ENCODE measurements at regions of chr22 and their contacts with region 1.

Region 1: GRCh38 chr22:36470162-36470993 is 11.1 kb downstream of the TXN2 start:
- DNase-seq: peak; percentile 88
- H3K4me3 Mint-ChIP-seq: no peak overlapping the region
- H3K27ac Mint-ChIP-seq: peak overlapping the region; percentile 57
- H3K4me1 Mint-ChIP-seq: peaks cover 21% of the 10 kb centered on the region
- H3K27me3 Mint-ChIP-seq: no peaks in the 10 kb centered on the region

Region 2: DNA sequence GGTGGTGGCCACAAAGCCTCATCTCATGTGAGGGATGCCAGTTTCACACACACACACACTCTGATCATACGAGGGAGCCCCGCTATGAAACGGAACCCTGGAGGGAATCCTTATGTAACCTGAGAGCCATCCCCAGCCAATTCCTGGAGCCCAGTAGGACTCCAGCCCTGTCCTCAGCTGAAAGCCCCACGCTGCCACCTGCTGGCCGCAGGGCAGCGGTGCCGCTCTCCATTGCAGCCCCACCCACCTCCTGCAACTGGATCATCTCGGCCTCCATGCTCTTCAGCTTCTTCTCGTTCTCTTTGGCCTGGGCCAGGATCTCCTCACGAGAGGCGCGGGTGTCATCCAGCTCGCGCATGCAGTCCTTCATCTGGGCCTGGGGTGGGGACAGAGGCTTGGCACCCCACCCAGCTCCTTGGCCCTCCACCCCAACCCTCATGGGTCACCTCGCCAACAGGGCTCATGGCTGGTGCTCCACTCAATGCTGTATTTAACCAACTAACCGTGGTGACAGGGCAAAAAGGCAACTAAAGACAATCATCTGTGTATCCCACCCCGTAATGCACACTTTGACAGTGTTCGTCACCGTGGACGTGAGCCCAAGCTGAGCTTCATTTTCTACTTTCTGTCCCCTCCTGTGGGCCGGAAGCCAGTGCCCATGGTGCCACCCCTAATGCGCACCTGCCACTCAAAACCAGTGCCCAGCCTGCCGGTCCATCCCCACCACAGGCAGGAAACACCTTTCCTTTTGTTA is 183.7 kb before region 1 on chr22:
- CTCF ChIA-PET with region 1: interaction called, 12 read pairs
- POLR2A ChIA-PET with region 1: no interaction called
- intact Hi-C with region 1: no loop called
- DNase-seq: peak; percentile 77
- H3K4me3 Mint-ChIP-seq: peak overlapping the region; percentile 4
- H3K27ac Mint-ChIP-seq: peak overlapping the region; percentile 60
- H3K4me1 Mint-ChIP-seq: peaks cover 23% of the 10 kb centered on the region
- H3K27me3 Mint-ChIP-seq: no peaks in the 10 kb centered on the region

Region 3: GRCh38 chr22:36365020-36365411 is 105.4 kb before region 1 on chr22:
- CTCF ChIA-PET with region 1: interaction called, 11 read pairs
- POLR2A ChIA-PET with region 1: interaction called, 3 read pairs
- intact Hi-C with region 1: no loop called
- DNase-seq: peak; percentile 95
- H3K4me3 Mint-ChIP-seq: peak overlapping the region; percentile 60
- H3K27ac Mint-ChIP-seq: peak overlapping the region; percentile 85
- H3K4me1 Mint-ChIP-seq: peaks cover 95% of the 10 kb centered on the region
- H3K27me3 Mint-ChIP-seq: no peaks in the 10 kb centered on the region

Region 4: DNA sequence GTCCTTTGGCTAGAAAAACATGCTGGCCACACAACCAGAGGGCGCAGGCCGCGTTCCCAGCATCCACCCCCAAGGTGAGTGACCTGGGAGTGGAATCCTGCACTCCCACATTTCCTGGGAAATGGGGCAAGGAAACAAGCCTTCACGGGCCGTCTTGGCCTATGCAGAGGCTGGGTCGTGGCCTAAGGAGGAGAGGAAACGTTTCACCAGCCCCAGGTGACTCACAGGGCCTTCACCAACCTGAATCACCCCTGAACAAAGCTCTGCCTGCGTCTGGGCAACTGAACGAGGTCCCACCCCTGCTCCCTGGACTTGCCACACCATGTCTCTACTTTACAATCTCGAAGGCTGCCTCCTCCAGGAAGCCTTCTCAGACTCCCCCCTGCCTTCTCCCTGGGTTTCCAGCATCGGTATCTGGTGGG is 95.8 kb before region 1 on chr22:
- CTCF ChIA-PET with region 1: interaction called, 11 read pairs
- POLR2A ChIA-PET with region 1: interaction called, 3 read pairs
- intact Hi-C with region 1: no loop called
- DNase-seq: peak; percentile 86
- H3K4me3 Mint-ChIP-seq: peak overlapping the region; percentile 48
- H3K27ac Mint-ChIP-seq: peak overlapping the region; percentile 93
- H3K4me1 Mint-ChIP-seq: peaks cover 97% of the 10 kb centered on the region
- H3K27me3 Mint-ChIP-seq: no peaks in the 10 kb centered on the region

Region 5: GRCh38 chr22:36481393-36482168 is 11.2 kb after region 1 on chr22 and contains the start of gene TXN2:
- CTCF ChIA-PET with region 1: interaction called, 12 read pairs
- POLR2A ChIA-PET with region 1: no interaction called
- intact Hi-C with region 1: no loop called
- DNase-seq: peak; percentile 96
- H3K4me3 Mint-ChIP-seq: peak within 1 kb of the TSS; percentile 100
- H3K27ac Mint-ChIP-seq: peak within 1 kb of the TSS; percentile 96
- H3K4me1 Mint-ChIP-seq: peaks cover 15% of the 10 kb centered on the region
- H3K27me3 Mint-ChIP-seq: no peaks in the 10 kb centered on the region
- total RNA-seq, gene TXN2: 94.3 to 97.0 TPM

Region 6: GRCh38 chr22:36486619-36487384 is 16.4 kb after region 1 on chr22:
- CTCF ChIA-PET with region 1: interaction called, 12 read pairs
- POLR2A ChIA-PET with region 1: no interaction called
- intact Hi-C with region 1: no loop called
- DNase-seq: peak; percentile 71
- H3K4me3 Mint-ChIP-seq: no peak overlapping the region
- H3K27ac Mint-ChIP-seq: no peak overlapping the region
- H3K4me1 Mint-ChIP-seq: peaks cover 3% of the 10 kb centered on the region
- H3K27me3 Mint-ChIP-seq: no peaks in the 10 kb centered on the region

Region 7: GRCh38 chr22:36671404-36671803 is 201.0 kb after region 1 on chr22:
- CTCF ChIA-PET with region 1: no interaction called
- POLR2A ChIA-PET with region 1: no interaction called
- intact Hi-C with region 1: no loop called
- DNase-seq: no peak
- H3K4me3 Mint-ChIP-seq: no peak overlapping the region
- H3K27ac Mint-ChIP-seq: no peak overlapping the region
- H3K4me1 Mint-ChIP-seq: no peaks in the 10 kb centered on the region
- H3K27me3 Mint-ChIP-seq: peaks cover 10% of the 10 kb centered on the region

Region 8: GRCh38 chr22:36946421-36947158 is 476.2 kb after region 1 on chr22:
- CTCF ChIA-PET with region 1: no interaction called
- POLR2A ChIA-PET with region 1: no interaction called
- intact Hi-C with region 1: no loop called
- DNase-seq: peak; percentile 8
- H3K4me3 Mint-ChIP-seq: no peak overlapping the region
- H3K27ac Mint-ChIP-seq: no peak overlapping the region
- H3K4me1 Mint-ChIP-seq: peaks cover 3% of the 10 kb centered on the region
- H3K27me3 Mint-ChIP-seq: peaks cover 1% of the 10 kb centered on the region

Measured in activated CD4-positive, alpha-beta memory T cell treated with anti-CD3 and anti-CD28 coated beads for 36 hours (primary cell).